Adrenal gland (tissue), 19 donors: ENCODE measurements at regions of chr10 and their contacts with region 1.

Region 1: GRCh38 chr10:47311932-47312662 is 10.2 kb upstream of the GDF2 start:
- DNase-seq: peak; percentile 80 to 93 (median 89)
- H3K4me3 ChIP-seq: no peak overlapping the region
- H3K27ac ChIP-seq: no peak overlapping the region
- H3K4me1 ChIP-seq: peaks cover 0 to 12% of the 10 kb centered on the region in 2 donors
- H3K27me3 ChIP-seq: no peaks in the 10 kb centered on the region
- CTCF ChIP-seq: peak; percentile 64 to 93 (median 84)
- POLR2A ChIP-seq: no peak

Region 2: DNA sequence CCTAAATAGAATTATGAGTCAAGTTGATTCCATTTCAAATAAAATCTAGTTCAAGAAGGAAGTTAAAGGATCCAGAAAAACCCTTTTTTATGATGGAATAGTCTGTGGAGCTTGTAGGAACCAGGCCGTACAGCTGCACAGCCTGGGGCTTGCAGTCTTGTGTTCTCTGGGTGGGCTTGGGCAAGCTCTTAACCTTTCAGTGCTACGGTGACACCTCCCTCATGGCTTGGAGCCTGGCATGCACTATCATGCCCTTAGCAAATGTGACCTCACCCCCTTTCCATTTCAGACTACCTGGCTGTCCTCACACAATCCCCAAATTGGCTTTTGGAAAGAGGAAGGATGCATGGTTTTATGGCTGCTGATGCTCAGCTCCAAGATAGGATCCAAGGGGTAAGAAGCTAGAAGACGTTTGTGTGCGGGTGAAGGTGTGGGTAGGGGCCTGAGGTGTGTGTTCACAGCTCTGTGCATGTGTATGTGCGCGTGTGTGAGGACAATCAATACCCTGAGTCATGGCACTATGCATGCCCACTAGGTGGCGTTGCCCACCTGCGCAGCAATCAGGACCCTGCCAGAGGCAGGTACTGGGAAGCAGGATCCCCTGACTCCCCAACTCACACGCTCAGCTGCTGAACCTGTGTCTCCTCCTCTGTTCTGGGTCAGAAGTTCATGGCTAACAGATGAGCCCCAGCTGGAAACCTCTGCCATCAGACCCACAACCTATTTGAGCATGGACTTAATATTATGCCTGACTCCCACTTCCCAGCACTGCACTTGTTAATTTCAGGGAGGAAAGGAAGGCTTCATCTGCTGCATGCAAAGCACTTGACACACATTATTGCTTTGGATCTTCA is 287.5 kb before region 1 on chr10:
- intact Hi-C with region 1: loop called in 1 of 2 experiments (anchors 5 kb)
- DNase-seq: peak; percentile 43 to 92 (median 70)
- H3K4me3 ChIP-seq: no peak overlapping the region
- H3K27ac ChIP-seq: no peak overlapping the region
- H3K4me1 ChIP-seq: no peaks in the 10 kb centered on the region
- H3K27me3 ChIP-seq: no peaks in the 10 kb centered on the region
- CTCF ChIP-seq: peak; percentile 70 to 84 (median 78)
- POLR2A ChIP-seq: no peak

Region 3: GRCh38 chr10:47047671-47048525 is 264.2 kb before region 1 on chr10:
- intact Hi-C with region 1: loop called (anchors 5 kb)
- DNase-seq: peak; percentile 66 to 89 (median 77)
- H3K4me3 ChIP-seq: no peak overlapping the region
- H3K27ac ChIP-seq: no peak overlapping the region
- H3K4me1 ChIP-seq: no peaks in the 10 kb centered on the region
- H3K27me3 ChIP-seq: no peaks in the 10 kb centered on the region
- CTCF ChIP-seq: peak; percentile 77 to 88 (median 82)
- POLR2A ChIP-seq: no peak